Right ventricle myocardium superior (tissue), 1 donor: ENCODE measurements at regions of chr7 and their contacts with region 1.

Region 1: GRCh38 chr7:150898475-150899011 is 46.2 kb downstream of the AOC1 start:
- DNase-seq: peak; percentile 90
- ATAC-seq: peak; percentile 66

Region 2: DNA sequence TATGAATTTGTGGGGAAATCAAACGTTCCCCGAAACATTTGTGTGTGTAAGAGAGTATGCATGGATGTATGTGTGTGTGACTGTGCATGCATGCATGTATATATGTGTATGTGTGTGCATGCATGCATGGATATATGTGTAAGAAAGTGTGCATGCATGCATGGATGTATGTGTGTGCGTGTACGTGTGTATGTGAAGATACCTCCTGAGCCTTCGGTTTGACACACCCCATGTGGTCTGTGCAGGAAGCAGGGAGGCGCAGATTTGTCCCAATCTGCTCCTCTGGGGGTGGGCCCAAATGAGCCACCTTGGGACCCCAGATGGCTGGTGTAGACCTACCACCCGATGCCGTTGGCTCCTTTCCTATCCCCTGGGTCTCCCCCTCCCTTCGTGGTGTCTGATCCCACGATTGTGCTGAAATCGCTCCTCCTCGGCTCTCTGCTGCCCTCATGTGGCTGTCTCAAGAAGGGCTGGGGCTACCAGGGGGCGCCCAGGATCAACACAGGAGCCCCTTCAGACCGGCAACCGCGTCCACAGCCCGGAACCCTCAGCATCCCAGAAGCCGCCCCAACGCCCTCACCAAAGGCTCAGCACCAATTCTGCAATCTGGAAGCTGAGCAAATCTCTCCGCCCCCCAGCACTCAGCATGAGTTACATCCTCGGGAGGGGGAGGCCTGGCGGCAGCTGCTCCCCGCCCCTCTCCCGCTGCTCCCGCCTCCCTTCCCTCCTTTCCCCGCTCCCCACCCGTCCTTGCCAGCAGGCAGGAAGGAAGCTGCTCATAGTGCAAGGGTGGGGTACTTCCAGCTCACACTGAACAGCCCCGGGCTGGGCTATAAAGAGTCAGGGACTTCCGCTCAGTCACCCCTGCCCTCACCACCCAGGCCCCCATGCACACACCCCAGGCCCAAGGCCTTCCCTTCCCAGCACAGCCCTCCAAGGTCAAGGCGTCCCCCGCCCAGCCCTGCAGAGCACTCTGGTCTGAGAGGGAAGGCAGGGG is 90.0 kb after region 1 on chr7:
- intact Hi-C with region 1: loop called (anchors 2 kb)
- DNase-seq: peak; percentile 78
- ATAC-seq: peak; percentile 59